ENCODE measurements at regions of chr18 and their contacts with region 1.

Region 1: GRCh38 chr18:28476302-28476701 is 299.4 kb upstream of the CDH2 start:
- DNase-seq: no peak
- H3K4me3 ChIP-seq: no peak overlapping the region
- H3K27ac ChIP-seq: no peak overlapping the region
- H3K4me1 ChIP-seq: no peaks in the 10 kb centered on the region
- H3K27me3 ChIP-seq: no peaks in the 10 kb centered on the region
- CTCF ChIP-seq: no peak

Region 2: GRCh38 chr18:28455971-28456370 is 20.3 kb before region 1 on chr18:
- CTCF ChIA-PET with region 1: no interaction called
- POLR2A ChIA-PET with region 1: no interaction called
- intact Hi-C with region 1: loop called (anchors 2 kb)
- DNase-seq: no peak
- H3K4me3 ChIP-seq: no peak overlapping the region
- H3K27ac ChIP-seq: no peak overlapping the region
- H3K4me1 ChIP-seq: no peaks in the 10 kb centered on the region
- H3K27me3 ChIP-seq: no peaks in the 10 kb centered on the region
- CTCF ChIP-seq: no peak